ENCODE measurements at regions of chr13 and their contacts with region 1.

Region 1: GRCh38 chr13:40109356-40109844 is 453.9 kb downstream of the COG6 start:
- DNase-seq: peak; percentile 59
- H3K4me3 Mint-ChIP-seq: no peak overlapping the region
- H3K27ac Mint-ChIP-seq: peak overlapping the region; percentile 25
- H3K4me1 Mint-ChIP-seq: peaks cover 21% of the 10 kb centered on the region
- H3K27me3 Mint-ChIP-seq: no peaks in the 10 kb centered on the region

Region 2: GRCh38 chr13:40132249-40132648 is 22.8 kb after region 1 on chr13:
- CTCF ChIA-PET with region 1: no interaction called
- intact Hi-C with region 1: loop called (anchors 1 kb)
- DNase-seq: peak; percentile 87
- H3K4me3 Mint-ChIP-seq: no peak overlapping the region
- H3K27ac Mint-ChIP-seq: peak overlapping the region; percentile 66
- H3K4me1 Mint-ChIP-seq: peaks cover 25% of the 10 kb centered on the region
- H3K27me3 Mint-ChIP-seq: no peaks in the 10 kb centered on the region

Region 3: DNA sequence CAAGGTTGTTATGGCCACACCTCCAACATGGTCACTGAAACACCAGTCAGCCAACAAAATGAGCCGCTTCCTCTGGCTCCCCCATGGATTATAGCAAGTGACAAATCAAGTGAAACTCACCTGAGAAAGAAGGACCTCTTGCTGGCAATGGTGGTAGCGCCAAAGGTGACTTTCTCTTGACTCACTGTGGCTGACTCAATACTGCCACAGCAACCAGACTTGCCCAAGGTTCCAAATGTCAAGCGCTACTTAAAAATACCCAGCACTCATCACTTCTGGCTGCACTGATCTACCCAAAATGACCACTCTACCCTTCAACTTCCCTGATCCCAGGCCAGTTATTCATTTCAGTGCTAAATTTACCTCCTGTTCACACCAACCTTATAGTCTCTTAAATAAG is 61.6 kb after region 1 on chr13:
- CTCF ChIA-PET with region 1: no interaction called
- intact Hi-C with region 1: loop called (anchors 1 kb)
- DNase-seq: peak; percentile 82
- H3K4me3 Mint-ChIP-seq: no peak overlapping the region
- H3K27ac Mint-ChIP-seq: peak overlapping the region; percentile 9
- H3K4me1 Mint-ChIP-seq: peaks cover 41% of the 10 kb centered on the region
- H3K27me3 Mint-ChIP-seq: no peaks in the 10 kb centered on the region

Region 4: DNA sequence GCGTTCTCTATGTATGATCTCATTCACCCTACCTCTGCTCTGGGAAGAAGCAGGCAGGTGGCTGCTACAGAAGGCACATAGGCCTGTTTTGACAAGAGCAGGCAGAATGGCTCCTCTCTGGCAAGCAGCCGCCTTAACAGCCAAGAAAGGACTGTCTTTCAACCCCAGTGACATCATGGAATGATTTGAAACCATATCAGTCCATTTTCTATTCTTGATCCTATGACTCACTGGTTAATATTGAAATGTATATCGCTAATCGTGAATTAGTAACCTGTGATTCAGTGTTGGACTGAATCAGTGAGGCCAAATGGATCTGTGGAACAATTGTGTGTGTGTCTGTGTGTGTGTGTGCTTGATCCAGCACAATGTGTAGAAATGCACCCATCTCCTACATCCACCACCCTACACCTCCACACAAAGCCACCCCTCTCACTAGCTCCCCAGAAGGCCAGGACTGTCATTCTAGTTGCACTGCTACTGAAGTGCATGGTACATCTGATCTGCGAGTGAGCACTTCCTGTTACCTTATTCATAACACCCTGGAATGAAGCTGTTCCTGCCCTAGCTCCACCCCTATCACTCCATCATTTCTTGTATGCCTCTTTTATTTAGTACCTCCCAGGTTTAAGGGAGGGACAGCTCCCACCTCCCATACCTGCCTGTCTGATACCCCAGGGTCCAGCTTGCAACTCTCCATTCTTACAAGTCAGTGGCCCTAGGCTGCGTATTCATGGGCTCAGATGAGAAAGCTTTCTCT is 97.0 kb after region 1 on chr13:
- CTCF ChIA-PET with region 1: no interaction called
- intact Hi-C with region 1: loop called (anchors 1 kb)
- DNase-seq: peak; percentile 74
- H3K4me3 Mint-ChIP-seq: peak overlapping the region; percentile 64
- H3K27ac Mint-ChIP-seq: peak overlapping the region; percentile 100
- H3K4me1 Mint-ChIP-seq: peaks cover 73% of the 10 kb centered on the region
- H3K27me3 Mint-ChIP-seq: no peaks in the 10 kb centered on the region